H1 (cell line): ENCODE measurements at regions of chr7 and their contacts with region 1.

Region 1: GRCh38 chr7:992709-993607 is 10.0 kb downstream of the CYP2W1 start:
- DNase-seq: peak; percentile 94 to 96
- H3K4me3 ChIP-seq: no peak overlapping the region
- H3K27ac ChIP-seq: no peak overlapping the region
- H3K4me1 ChIP-seq: peaks cover 0 to 8% (median 5%) of the 10 kb centered on the region in 4 experiments; a peak in 5 of 7 replicates
- H3K27me3 ChIP-seq: no peaks in the 10 kb centered on the region
- CTCF ChIP-seq: peak in 2 of 3 experiments; percentile 100; a peak in 3 of 4 replicates
- EP300 ChIP-seq: 0 out of 3 replicates have a peak, but pooled peaks of 1 of the 2 experiments have one; percentile 42
- POLR2A ChIP-seq: no peak
- RAD21 ChIP-seq: peak; percentile 96 to 98

Region 2: GRCh38 chr7:954330-955238 is 38.4 kb before region 1 on chr7 and contains the start of gene ADAP1:
- CTCF ChIA-PET with region 1: interaction called, 12 read pairs
- POLR2A ChIA-PET with region 1: no interaction called
- DNase-seq: no peak
- H3K4me3 ChIP-seq: peak within 1 kb of the TSS; percentile 27 to 62 (median 46)
- H3K27ac ChIP-seq: no peak within 1 kb of the TSS
- H3K4me1 ChIP-seq: peaks cover 0 to 12% (median 6%) of the 10 kb centered on the region in 4 experiments; a peak in 5 of 7 replicates
- H3K27me3 ChIP-seq: peaks cover 2 to 26% (median 19%) of the 10 kb centered on the region in 4 experiments; a peak in 6 of 7 replicates
- CTCF ChIP-seq: peak in 1 of 3 experiments; percentile 12; a peak in 1 of 4 replicates
- EP300 ChIP-seq: no peak
- POLR2A ChIP-seq: no peak
- RAD21 ChIP-seq: peak in 1 of 2 experiments; percentile 51; a peak in 2 of 4 replicates
- total RNA-seq, gene ADAP1: 5.4 and 5.8 TPM in 2 replicates

Region 3: GRCh38 chr7:1014704-1015103 is 21.7 kb after region 1 on chr7:
- CTCF ChIA-PET with region 1: interaction called, 117 read pairs
- POLR2A ChIA-PET with region 1: interaction called, 3 read pairs
- DNase-seq: no peak
- H3K4me3 ChIP-seq: no peak overlapping the region
- H3K27ac ChIP-seq: no peak overlapping the region
- H3K4me1 ChIP-seq: no peaks in the 10 kb centered on the region
- H3K27me3 ChIP-seq: no peaks in the 10 kb centered on the region
- CTCF ChIP-seq: no peak
- EP300 ChIP-seq: no peak
- POLR2A ChIP-seq: no peak
- RAD21 ChIP-seq: no peak

Region 4: GRCh38 chr7:1059200-1060091 is 66.5 kb after region 1 on chr7:
- CTCF ChIA-PET with region 1: interaction called, 143 read pairs
- POLR2A ChIA-PET with region 1: interaction called, 6 read pairs
- DNase-seq: peak; percentile 75 to 93
- H3K4me3 ChIP-seq: peak overlapping the region; percentile 15 to 55 (median 30); a peak in 7 of 8 replicates
- H3K27ac ChIP-seq: no peak overlapping the region
- H3K4me1 ChIP-seq: peaks cover 0 to 17% (median 11%) of the 10 kb centered on the region in 4 experiments; a peak in 6 of 7 replicates
- H3K27me3 ChIP-seq: no peaks in the 10 kb centered on the region
- CTCF ChIP-seq: no peak
- EP300 ChIP-seq: no peak
- POLR2A ChIP-seq: no peak
- RAD21 ChIP-seq: no peak

Region 5: DNA sequence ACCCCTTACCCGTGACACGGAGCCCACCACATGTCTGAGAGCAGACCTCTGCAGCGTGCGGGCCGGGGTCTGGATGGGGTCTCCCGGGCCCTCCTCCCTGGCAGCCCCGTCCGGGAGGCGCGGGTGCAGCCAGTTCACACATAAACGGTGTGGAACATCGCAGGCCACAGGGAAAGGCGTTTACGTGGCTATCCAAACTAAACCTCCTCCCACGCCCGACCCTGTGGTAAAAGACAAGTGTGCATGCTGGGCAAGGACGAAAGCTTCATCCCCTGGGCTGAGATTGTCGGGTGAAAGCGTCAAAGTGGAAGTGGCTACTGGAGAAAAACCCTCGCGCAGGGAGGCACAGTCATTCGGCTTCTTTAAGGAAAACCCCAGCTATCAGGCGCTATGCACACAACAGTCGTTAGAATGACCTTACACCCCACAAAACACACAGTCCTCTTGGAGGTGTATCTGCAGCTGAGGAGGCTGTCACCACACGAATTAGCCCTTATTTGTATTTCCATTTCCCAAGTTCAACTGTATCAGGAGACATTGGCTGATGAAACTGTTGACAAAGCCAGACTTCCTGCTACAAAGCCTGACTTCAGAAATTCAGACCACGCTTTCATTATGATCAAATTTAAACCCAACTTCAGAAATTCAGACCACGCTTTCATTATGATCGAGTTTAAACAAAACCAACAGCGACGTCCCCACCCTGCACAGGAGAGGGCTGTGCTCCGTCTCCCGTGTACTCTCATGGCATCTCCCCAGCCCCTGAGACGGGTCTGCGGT is 110.2 kb after region 1 on chr7:
- CTCF ChIA-PET with region 1: interaction called, 10 read pairs
- POLR2A ChIA-PET with region 1: no interaction called
- DNase-seq: no peak
- H3K4me3 ChIP-seq: no peak overlapping the region
- H3K27ac ChIP-seq: no peak overlapping the region
- H3K4me1 ChIP-seq: no peaks in the 10 kb centered on the region
- H3K27me3 ChIP-seq: no peaks in the 10 kb centered on the region
- CTCF ChIP-seq: no peak
- EP300 ChIP-seq: no peak
- POLR2A ChIP-seq: no peak
- RAD21 ChIP-seq: no peak

Region 6: GRCh38 chr7:1144269-1144771 is 151.4 kb after region 1 on chr7:
- CTCF ChIA-PET with region 1: interaction called, 24 read pairs
- POLR2A ChIA-PET with region 1: no interaction called
- DNase-seq: no peak
- H3K4me3 ChIP-seq: no peak overlapping the region
- H3K27ac ChIP-seq: no peak overlapping the region
- H3K4me1 ChIP-seq: no peaks in the 10 kb centered on the region
- H3K27me3 ChIP-seq: no peaks in the 10 kb centered on the region
- CTCF ChIP-seq: peak in 1 of 3 experiments; percentile 18; a peak in 1 of 4 replicates
- EP300 ChIP-seq: no peak
- POLR2A ChIP-seq: no peak
- RAD21 ChIP-seq: peak; percentile 19 to 49; a peak in 3 of 4 replicates

Region 7: DNA sequence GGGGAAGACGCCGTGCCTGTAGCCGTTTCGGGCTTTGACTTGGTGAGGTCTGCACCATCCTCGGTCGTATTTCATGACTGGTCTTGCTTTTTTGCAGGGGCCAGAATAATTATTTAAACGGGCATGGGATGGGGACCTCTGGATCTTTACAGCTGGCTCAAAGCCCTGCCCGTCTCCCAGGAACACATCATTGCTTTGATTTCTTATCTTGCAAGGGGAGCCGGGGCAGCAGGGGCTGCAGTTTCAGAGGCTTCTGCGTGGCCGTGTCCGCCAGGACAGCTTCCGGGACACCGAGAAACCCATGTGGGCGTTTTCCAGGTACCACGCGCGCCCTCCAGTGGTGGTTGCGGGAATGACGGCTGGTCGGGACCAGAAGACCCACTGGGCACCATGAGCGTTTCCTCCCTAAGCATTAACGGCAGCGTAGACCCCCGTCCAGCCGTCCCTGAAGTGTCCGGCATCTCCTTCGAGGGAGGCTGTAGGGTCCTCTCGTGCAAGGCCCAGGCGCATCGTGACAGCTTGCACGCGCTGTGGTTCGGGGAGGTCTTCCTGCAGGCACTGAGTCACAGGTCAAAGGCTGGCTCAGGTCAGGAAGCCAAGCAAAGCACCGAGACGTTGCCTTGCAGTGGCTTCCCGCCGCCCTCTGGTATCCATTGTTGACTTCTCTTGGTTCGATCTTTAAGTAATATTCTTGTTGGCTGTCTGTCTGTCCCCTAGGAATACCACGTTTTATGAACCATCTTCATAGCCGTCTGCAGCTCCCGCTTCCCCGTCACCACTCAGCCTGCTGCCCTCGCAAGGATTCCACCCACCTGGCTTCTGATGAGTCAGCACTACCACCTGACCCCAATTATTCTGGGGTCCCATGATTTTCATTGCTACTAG is 183.3 kb after region 1 on chr7:
- CTCF ChIA-PET with region 1: interaction called, 14 read pairs
- POLR2A ChIA-PET with region 1: interaction called, 3 read pairs
- DNase-seq: peak in 1 of 2 experiments; percentile 100
- H3K4me3 ChIP-seq: peak overlapping the region in 1 of 4 experiments; percentile 35; a peak in 1 of 8 replicates
- H3K27ac ChIP-seq: no peak overlapping the region
- H3K4me1 ChIP-seq: no peaks in the 10 kb centered on the region; a peak in 2 of 7 replicates
- H3K27me3 ChIP-seq: no peaks in the 10 kb centered on the region; a peak in 2 of 7 replicates
- CTCF ChIP-seq: peak in 2 of 3 experiments; percentile 89 to 92; a peak in 3 of 4 replicates
- EP300 ChIP-seq: no peak
- POLR2A ChIP-seq: no peak
- RAD21 ChIP-seq: peak; percentile 68 to 76